ENCODE measurements at regions of chr20 and their contacts with region 1.

Region 1: GRCh38 chr20:9989066-9989724 is 45.6 kb upstream of the ANKEF1 start:
- DNase-seq: no peak
- H3K4me3 ChIP-seq: no peak overlapping the region
- H3K4me3 Mint-ChIP-seq: no peak overlapping the region
- H3K27ac ChIP-seq: no peak overlapping the region
- H3K27ac Mint-ChIP-seq: no peak overlapping the region
- H3K4me1 ChIP-seq: no peaks in the 10 kb centered on the region
- H3K4me1 Mint-ChIP-seq: no peaks in the 10 kb centered on the region
- H3K27me3 ChIP-seq: no peaks in the 10 kb centered on the region
- H3K27me3 Mint-ChIP-seq: peaks cover 3 to 40% of the 10 kb centered on the region in 2 donors

Region 2: GRCh38 chr20:9503526-9504245 is 485.5 kb before region 1 on chr20:
- CTCF ChIA-PET with region 1: no interaction called
- POLR2A ChIA-PET with region 1: no interaction called
- DNase-seq: no peak
- H3K4me3 ChIP-seq: no peak overlapping the region
- H3K4me3 Mint-ChIP-seq: no peak overlapping the region
- H3K27ac ChIP-seq: no peak overlapping the region
- H3K27ac Mint-ChIP-seq: no peak overlapping the region
- H3K4me1 ChIP-seq: no peaks in the 10 kb centered on the region
- H3K4me1 Mint-ChIP-seq: no peaks in the 10 kb centered on the region
- H3K27me3 ChIP-seq: no peaks in the 10 kb centered on the region
- H3K27me3 Mint-ChIP-seq: peaks cover 7 to 8% of the 10 kb centered on the region in 2 donors

Region 3: DNA sequence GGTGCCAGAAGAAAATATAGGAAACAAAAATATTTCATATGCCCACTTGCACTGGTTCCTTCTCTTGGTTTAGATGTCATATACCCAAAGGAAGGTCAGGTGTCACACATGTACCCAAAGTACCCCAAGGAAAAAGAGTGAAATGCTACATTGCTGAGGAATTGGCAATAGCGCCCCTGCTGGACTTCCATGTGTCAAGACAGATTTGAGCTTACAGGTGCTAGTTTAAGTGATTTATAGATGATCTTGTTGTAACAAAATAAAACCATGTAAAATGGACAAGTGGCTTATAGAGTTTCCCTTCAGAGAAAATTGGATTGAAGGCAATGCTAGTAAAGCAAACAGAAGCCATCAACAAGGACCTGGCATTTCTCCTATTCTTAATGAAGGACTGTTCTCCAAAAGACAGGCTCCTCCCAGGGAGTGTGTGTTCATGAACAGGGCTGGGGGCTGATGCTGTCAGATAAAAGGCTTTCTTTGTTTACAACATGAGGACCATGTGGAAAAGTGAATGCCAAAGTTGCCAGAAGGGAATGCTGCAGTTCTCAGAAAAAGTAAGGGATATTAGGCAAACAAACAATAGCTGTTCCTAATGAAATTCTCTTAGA is 86.0 kb before region 1 on chr20:
- CTCF ChIA-PET with region 1: no interaction called
- POLR2A ChIA-PET with region 1: no interaction called
- DNase-seq: no peak
- H3K4me3 ChIP-seq: no peak overlapping the region
- H3K4me3 Mint-ChIP-seq: no peak overlapping the region
- H3K27ac ChIP-seq: no peak overlapping the region
- H3K27ac Mint-ChIP-seq: no peak overlapping the region
- H3K4me1 ChIP-seq: no peaks in the 10 kb centered on the region
- H3K4me1 Mint-ChIP-seq: no peaks in the 10 kb centered on the region
- H3K27me3 ChIP-seq: no peaks in the 10 kb centered on the region
- H3K27me3 Mint-ChIP-seq: peaks cover 5 to 7% of the 10 kb centered on the region in 2 donors

Region 4: GRCh38 chr20:9978397-9979004 is 10.7 kb before region 1 on chr20:
- CTCF ChIA-PET with region 1: interaction called, 11 read pairs
- POLR2A ChIA-PET with region 1: no interaction called
- DNase-seq: peak in 4 of 5 donors; percentile 3 to 57 (median 50)
- H3K4me3 ChIP-seq: no peak overlapping the region
- H3K4me3 Mint-ChIP-seq: no peak overlapping the region
- H3K27ac ChIP-seq: no peak overlapping the region
- H3K27ac Mint-ChIP-seq: no peak overlapping the region
- H3K4me1 ChIP-seq: no peaks in the 10 kb centered on the region
- H3K4me1 Mint-ChIP-seq: no peaks in the 10 kb centered on the region
- H3K27me3 ChIP-seq: no peaks in the 10 kb centered on the region
- H3K27me3 Mint-ChIP-seq: peaks cover 3 to 8% of the 10 kb centered on the region in 2 donors

Measured in CD8-positive, alpha-beta memory T cell (primary cell).